CD8-positive, alpha-beta T cell (primary cell): ENCODE measurements at regions of chr3 and their contacts with region 1.

Region 1: GRCh38 chr3:132659365-132660051 is at the start of gene ACAD11:
- DNase-seq: peak in 8 of 9 experiments; percentile 2 to 68 (median 29)
- ATAC-seq: peak; percentile 26
- H3K4me3 ChIP-seq: peak within 1 kb of the TSS; percentile 80 to 94
- H3K4me3 Mint-ChIP-seq: peak within 1 kb of the TSS; percentile 96
- H3K27ac ChIP-seq: peak within 1 kb of the TSS; percentile 83 to 89
- H3K27ac Mint-ChIP-seq: peak within 1 kb of the TSS; percentile 98
- H3K4me1 ChIP-seq: peaks cover 35% of the 10 kb centered on the region
- H3K4me1 Mint-ChIP-seq: peaks cover 69% of the 10 kb centered on the region
- H3K27me3 ChIP-seq: no peaks in the 10 kb centered on the region
- H3K27me3 Mint-ChIP-seq: no peaks in the 10 kb centered on the region
- CTCF ChIP-seq: peak; percentile 8
- total RNA-seq, gene ACAD11: 30.0 to 31.6 TPM

Region 2: DNA sequence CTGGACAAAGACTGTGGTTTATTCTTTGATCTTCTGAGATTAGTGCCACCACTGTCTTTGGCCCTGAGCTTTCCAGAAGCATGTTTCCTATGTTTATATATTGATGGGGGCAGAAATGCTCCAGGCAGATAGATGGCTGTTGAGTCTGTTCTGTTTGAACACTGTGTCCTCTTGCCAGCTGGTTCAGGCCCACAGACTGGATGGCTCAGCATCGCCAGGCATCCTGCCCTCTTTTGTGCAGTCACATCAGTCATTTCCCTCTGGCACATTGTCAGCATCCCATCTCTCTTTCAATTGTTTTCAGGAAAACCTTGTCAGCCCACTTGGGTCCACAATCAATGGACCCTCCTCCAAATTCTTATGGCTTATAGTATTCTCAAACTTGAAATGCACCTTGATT is 1491.6 kb before region 1 on chr3:
- CTCF ChIA-PET with region 1: no interaction called
- POLR2A ChIA-PET with region 1: no interaction called
- intact Hi-C with region 1: no loop called
- DNase-seq: no peak
- ATAC-seq: no peak
- H3K4me3 ChIP-seq: no peak overlapping the region
- H3K4me3 Mint-ChIP-seq: no peak overlapping the region
- H3K27ac ChIP-seq: no peak overlapping the region
- H3K27ac Mint-ChIP-seq: no peak overlapping the region
- H3K4me1 ChIP-seq: peaks cover 1% of the 10 kb centered on the region
- H3K4me1 Mint-ChIP-seq: no peaks in the 10 kb centered on the region
- H3K27me3 ChIP-seq: no peaks in the 10 kb centered on the region
- H3K27me3 Mint-ChIP-seq: no peaks in the 10 kb centered on the region
- CTCF ChIP-seq: no peak

Region 3: DNA sequence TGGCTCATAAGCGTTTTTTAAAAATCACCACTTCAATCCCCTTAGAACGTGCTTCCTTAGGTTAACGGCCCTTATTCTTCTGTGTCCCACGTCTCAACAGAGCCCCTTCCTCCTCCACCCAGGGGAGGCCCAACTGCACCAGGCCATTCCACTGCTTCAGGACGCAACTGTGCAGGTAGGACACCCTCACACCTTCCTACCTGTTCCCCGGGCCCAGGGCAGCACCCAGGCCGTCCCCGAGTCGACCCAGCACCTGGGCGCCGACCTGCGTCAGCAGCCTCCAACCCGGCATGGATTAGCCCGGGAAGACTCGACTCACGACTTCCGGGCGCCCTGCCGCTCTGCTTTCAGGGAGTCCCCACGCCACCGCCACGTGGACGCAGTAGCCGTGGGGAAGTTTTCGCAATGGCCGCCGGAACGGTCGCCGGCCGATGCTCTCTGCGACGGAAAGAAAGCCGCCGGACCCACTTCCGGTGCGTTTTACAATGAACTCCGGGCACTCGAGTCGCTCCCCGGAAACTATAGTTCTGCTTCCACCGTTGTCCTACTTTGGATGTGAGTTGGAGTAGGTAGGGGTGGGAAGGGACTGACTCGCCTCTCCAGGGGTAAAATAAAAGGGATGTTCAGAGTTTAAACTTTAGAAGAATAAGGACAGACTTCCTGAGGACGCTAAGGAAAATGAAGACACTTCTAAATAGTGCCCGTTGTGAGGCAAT is 1156.8 kb before region 1 on chr3 and contains the start of gene MRPL3:
- CTCF ChIA-PET with region 1: no interaction called
- POLR2A ChIA-PET with region 1: no interaction called
- intact Hi-C with region 1: loop called (anchors 2 to 10 kb)
- DNase-seq: peak; percentile 67 to 92 (median 84)
- ATAC-seq: peak; percentile 88
- H3K4me3 ChIP-seq: peak within 1 kb of the TSS; percentile 74 to 95
- H3K4me3 Mint-ChIP-seq: peak within 1 kb of the TSS; percentile 97
- H3K27ac ChIP-seq: peak within 1 kb of the TSS; percentile 78 to 83
- H3K27ac Mint-ChIP-seq: peak within 1 kb of the TSS; percentile 95
- H3K4me1 ChIP-seq: peaks cover 27% of the 10 kb centered on the region
- H3K4me1 Mint-ChIP-seq: peaks cover 45% of the 10 kb centered on the region
- H3K27me3 ChIP-seq: no peaks in the 10 kb centered on the region
- H3K27me3 Mint-ChIP-seq: no peaks in the 10 kb centered on the region
- CTCF ChIP-seq: no peak
- total RNA-seq, gene MRPL3: 43.6 to 45.0 TPM

Region 4: DNA sequence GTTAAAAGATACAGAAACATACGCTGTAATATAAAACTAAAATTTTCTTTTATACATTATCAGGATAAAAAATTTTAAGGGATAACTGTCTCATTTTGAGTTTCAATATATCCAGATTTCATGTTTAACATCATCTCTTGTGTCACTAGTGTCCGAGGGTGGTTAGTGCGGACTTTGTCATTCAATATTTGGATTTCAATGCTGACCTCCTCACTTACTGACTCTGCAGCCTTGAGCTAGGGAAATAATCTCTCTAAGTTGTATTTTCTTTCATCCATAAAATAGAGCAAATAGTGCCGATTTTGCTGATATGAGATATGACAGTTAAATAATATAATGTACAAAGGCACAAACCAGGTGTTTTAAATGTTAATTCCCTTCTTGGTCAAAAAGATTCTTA is 827.9 kb before region 1 on chr3:
- CTCF ChIA-PET with region 1: no interaction called
- POLR2A ChIA-PET with region 1: no interaction called
- intact Hi-C with region 1: no loop called
- DNase-seq: no peak
- ATAC-seq: no peak
- H3K4me3 ChIP-seq: no peak overlapping the region
- H3K4me3 Mint-ChIP-seq: no peak overlapping the region
- H3K27ac ChIP-seq: no peak overlapping the region
- H3K27ac Mint-ChIP-seq: no peak overlapping the region
- H3K4me1 ChIP-seq: no peaks in the 10 kb centered on the region
- H3K4me1 Mint-ChIP-seq: no peaks in the 10 kb centered on the region
- H3K27me3 ChIP-seq: no peaks in the 10 kb centered on the region
- H3K27me3 Mint-ChIP-seq: peaks cover 7% of the 10 kb centered on the region
- CTCF ChIP-seq: no peak

Region 5: GRCh38 chr3:132670795-132671194 is 11.3 kb after region 1 on chr3:
- CTCF ChIA-PET with region 1: interaction called, 3 read pairs
- POLR2A ChIA-PET with region 1: interaction called, 10 read pairs
- intact Hi-C with region 1: loop called in 1 of 2 experiments (anchors 2 kb)
- DNase-seq: no peak
- ATAC-seq: no peak
- H3K4me3 ChIP-seq: no peak overlapping the region
- H3K4me3 Mint-ChIP-seq: no peak overlapping the region
- H3K27ac ChIP-seq: no peak overlapping the region
- H3K27ac Mint-ChIP-seq: no peak overlapping the region
- H3K4me1 ChIP-seq: no peaks in the 10 kb centered on the region
- H3K4me1 Mint-ChIP-seq: peaks cover 16% of the 10 kb centered on the region
- H3K27me3 ChIP-seq: no peaks in the 10 kb centered on the region
- H3K27me3 Mint-ChIP-seq: no peaks in the 10 kb centered on the region
- CTCF ChIP-seq: no peak

Region 6: DNA sequence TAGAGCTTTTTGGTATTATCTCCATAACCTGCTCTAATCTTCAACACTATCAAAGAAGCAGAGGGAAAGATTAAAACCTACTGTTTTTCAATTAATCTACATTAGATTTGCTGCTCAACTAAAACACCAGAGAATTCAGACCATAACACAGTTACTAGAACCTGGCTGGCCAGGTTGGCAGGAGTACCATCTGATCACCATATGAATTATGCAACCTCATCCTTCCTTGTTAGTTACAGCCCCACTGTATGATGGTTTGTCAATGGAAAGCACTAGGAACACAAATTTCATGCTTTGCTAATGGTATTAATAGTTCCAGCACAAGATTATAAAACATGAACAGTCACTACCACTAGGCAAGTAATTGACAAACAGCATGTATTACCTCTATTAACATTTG is 56.9 kb after region 1 on chr3:
- CTCF ChIA-PET with region 1: no interaction called
- POLR2A ChIA-PET with region 1: interaction called, 3 read pairs
- intact Hi-C with region 1: loop called in 1 of 2 experiments (anchors 2 kb)
- DNase-seq: no peak
- ATAC-seq: no peak
- H3K4me3 ChIP-seq: no peak overlapping the region
- H3K4me3 Mint-ChIP-seq: no peak overlapping the region
- H3K27ac ChIP-seq: no peak overlapping the region
- H3K27ac Mint-ChIP-seq: no peak overlapping the region
- H3K4me1 ChIP-seq: peaks cover 14% of the 10 kb centered on the region
- H3K4me1 Mint-ChIP-seq: peaks cover 41% of the 10 kb centered on the region
- H3K27me3 ChIP-seq: no peaks in the 10 kb centered on the region
- H3K27me3 Mint-ChIP-seq: no peaks in the 10 kb centered on the region
- CTCF ChIP-seq: no peak